Motor neuron (in vitro differentiated cells): ENCODE measurements at regions of chrX and their contacts with region 1.

Region 1: GRCh38 chrX:17242470-17242869 is 132.5 kb upstream of the NHS start:
- ATAC-seq: peak; percentile 32 to 71 (median 55)
- H3K4me3 ChIP-seq: no peak overlapping the region
- H3K27ac ChIP-seq: no peak overlapping the region
- H3K4me1 ChIP-seq: no peaks in the 10 kb centered on the region

Region 2: DNA sequence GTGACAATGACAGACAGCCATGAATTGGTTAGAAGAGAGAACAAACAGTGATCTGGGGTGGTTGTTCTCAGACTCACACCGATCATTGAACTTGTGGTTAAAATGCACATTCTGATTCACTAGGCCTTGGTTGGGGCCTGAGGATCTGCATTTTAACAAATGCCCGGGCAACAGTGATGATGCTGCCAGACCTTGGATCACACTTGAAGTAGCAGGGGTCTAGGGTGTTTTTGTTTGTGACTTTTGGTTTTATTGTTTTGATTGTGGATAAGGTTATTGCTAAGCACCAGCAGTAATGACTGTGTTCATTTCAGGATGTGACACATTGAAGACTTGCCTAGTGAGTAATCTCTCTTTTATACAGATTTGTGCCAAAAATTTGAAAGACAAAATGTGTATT is 419.7 kb before region 1 on chrX:
- in situ Hi-C with region 1: no loop called
- ATAC-seq: peak in 1 of 8 experiments; percentile 19
- H3K4me3 ChIP-seq: no peak overlapping the region
- H3K27ac ChIP-seq: no peak overlapping the region
- H3K4me1 ChIP-seq: peaks cover 2% of the 10 kb centered on the region in 2 donors

Region 3: DNA sequence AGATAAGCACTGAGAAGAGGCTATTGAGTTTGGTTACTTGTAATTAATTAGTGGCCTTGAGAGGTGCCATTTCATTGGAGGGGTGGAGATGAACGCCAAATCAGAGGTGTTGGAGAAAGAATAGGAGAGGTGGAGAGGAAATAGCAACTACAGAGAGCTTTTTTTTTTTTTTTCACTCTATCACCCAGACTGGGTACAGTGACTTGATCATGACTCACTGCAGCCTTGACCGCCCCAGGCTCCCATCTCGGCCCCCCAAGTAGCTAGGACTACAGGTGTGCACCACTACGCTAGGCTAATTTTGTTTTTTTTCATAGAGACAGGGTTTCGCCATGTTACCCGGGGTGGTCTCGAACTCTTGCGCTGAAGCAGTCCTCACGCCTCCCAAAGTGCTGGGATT is 137.8 kb after region 1 on chrX:
- in situ Hi-C with region 1: no loop called
- ATAC-seq: no peak
- H3K4me3 ChIP-seq: no peak overlapping the region
- H3K27ac ChIP-seq: no peak overlapping the region
- H3K4me1 ChIP-seq: peaks cover 0 to 3% of the 10 kb centered on the region in 2 donors

Region 4: GRCh38 chrX:17590892-17591740 is 348.6 kb after region 1 on chrX:
- in situ Hi-C with region 1: loop called in 1 of 9 experiments (anchors 25 kb)
- ATAC-seq: peak; percentile 78 to 90 (median 86)
- H3K4me3 ChIP-seq: peak overlapping the region in 2 of 5 donors; percentile 1 to 15
- H3K27ac ChIP-seq: peak overlapping the region; percentile 8 to 58
- H3K4me1 ChIP-seq: peaks cover 17 to 20% of the 10 kb centered on the region in 2 donors

Region 5: DNA sequence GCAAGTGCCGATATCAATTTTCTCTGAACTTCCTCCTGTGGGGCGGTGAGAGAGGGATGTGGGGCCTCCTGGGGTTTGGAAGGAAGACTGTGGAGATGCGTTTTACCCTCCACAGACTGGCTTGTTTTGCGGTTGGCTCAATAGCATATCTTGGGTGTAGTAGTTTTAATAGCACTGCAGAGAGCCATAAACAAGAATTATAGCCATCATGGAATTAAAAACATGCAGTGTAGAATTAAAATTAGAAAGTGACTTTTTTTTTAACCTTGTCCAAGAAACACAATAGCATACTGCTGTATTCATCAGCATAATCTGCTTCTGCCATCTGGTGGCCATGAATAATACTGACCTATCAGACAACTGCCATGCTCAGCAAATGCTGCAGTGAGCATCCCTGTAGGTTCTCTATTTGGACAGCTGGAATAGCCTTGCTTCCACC is 447.5 kb after region 1 on chrX:
- in situ Hi-C with region 1: loop called in 1 of 9 experiments (anchors 25 kb)
- ATAC-seq: peak; percentile 83 to 98 (median 97)
- H3K4me3 ChIP-seq: no peak overlapping the region
- H3K27ac ChIP-seq: no peak overlapping the region
- H3K4me1 ChIP-seq: peaks cover 15 to 19% of the 10 kb centered on the region in 2 donors